CD4-positive, alpha-beta memory T cell (primary cell): ENCODE measurements at regions of chr2 and their contacts with region 1.

Region 1: GRCh38 chr2:197184959-197185586 is 125.5 kb downstream of the ANKRD44 start:
- DNase-seq: no peak
- H3K4me3 ChIP-seq: no peak overlapping the region
- H3K4me3 Mint-ChIP-seq: peak overlapping the region in 2 of 8 donors; percentile 7 to 17
- H3K27ac ChIP-seq: no peak overlapping the region
- H3K27ac Mint-ChIP-seq: peak overlapping the region in 4 of 7 donors; percentile 27 to 92 (median 63)
- H3K4me1 ChIP-seq: peaks cover 79% of the 10 kb centered on the region
- H3K4me1 Mint-ChIP-seq: peaks cover 68 to 94% (median 79%) of the 10 kb centered on the region in 4 donors
- H3K27me3 ChIP-seq: no peaks in the 10 kb centered on the region
- H3K27me3 Mint-ChIP-seq: no peaks in the 10 kb centered on the region

Region 2: GRCh38 chr2:197145471-197146138 is 39.5 kb before region 1 on chr2:
- CTCF ChIA-PET with region 1: no interaction called
- POLR2A ChIA-PET with region 1: no interaction called
- intact Hi-C with region 1: loop called (anchors 5 kb)
- DNase-seq: peak; percentile 43 to 63 (median 50)
- H3K4me3 ChIP-seq: no peak overlapping the region
- H3K4me3 Mint-ChIP-seq: peak overlapping the region in 7 of 8 donors; percentile 14 to 84 (median 47)
- H3K27ac ChIP-seq: peak overlapping the region; percentile 42
- H3K27ac Mint-ChIP-seq: peak overlapping the region; percentile 72 to 95 (median 84)
- H3K4me1 ChIP-seq: peaks cover 89% of the 10 kb centered on the region
- H3K4me1 Mint-ChIP-seq: peaks cover 54 to 88% (median 69%) of the 10 kb centered on the region in 4 donors
- H3K27me3 ChIP-seq: no peaks in the 10 kb centered on the region
- H3K27me3 Mint-ChIP-seq: no peaks in the 10 kb centered on the region

Region 3: DNA sequence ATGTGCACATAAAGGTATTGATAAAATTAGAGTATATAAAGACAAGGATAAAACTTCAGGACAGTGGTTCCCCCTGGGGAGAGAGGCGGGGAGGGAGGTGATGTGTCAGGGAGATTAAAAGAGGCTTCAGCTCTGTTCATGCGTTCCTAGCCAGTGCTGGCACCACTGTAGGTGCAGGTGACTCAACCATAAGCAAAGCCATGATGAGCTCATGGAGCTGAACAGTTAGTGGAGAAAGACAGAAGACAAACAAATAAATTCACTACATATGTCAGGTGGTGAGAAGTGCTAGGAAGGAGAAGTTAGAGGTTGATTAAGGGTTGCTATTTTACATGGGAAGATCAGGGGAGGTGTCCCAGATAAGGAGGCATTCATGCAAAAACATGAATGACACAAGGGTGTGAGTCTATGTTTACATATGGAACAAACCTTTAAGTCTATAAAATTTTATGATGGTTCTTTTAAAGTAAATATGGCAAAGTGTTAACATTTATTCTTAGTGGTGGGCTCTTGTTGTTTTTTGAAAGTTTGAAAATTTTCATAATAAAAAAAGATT is 10.5 kb before region 1 on chr2:
- CTCF ChIA-PET with region 1: interaction called, 5 read pairs
- POLR2A ChIA-PET with region 1: no interaction called
- intact Hi-C with region 1: loop called (anchors 1 kb)
- DNase-seq: no peak
- H3K4me3 ChIP-seq: no peak overlapping the region
- H3K4me3 Mint-ChIP-seq: peak overlapping the region in 2 of 8 donors; percentile 3 to 6
- H3K27ac ChIP-seq: no peak overlapping the region
- H3K27ac Mint-ChIP-seq: peak overlapping the region in 6 of 7 donors; percentile 4 to 78 (median 42)
- H3K4me1 ChIP-seq: peaks cover 73% of the 10 kb centered on the region
- H3K4me1 Mint-ChIP-seq: peaks cover 42 to 70% (median 56%) of the 10 kb centered on the region in 4 donors
- H3K27me3 ChIP-seq: no peaks in the 10 kb centered on the region
- H3K27me3 Mint-ChIP-seq: no peaks in the 10 kb centered on the region